Breast epithelium (tissue), 4 donors: ENCODE measurements at regions of chr4 and their contacts with region 1.

Region 1: DNA sequence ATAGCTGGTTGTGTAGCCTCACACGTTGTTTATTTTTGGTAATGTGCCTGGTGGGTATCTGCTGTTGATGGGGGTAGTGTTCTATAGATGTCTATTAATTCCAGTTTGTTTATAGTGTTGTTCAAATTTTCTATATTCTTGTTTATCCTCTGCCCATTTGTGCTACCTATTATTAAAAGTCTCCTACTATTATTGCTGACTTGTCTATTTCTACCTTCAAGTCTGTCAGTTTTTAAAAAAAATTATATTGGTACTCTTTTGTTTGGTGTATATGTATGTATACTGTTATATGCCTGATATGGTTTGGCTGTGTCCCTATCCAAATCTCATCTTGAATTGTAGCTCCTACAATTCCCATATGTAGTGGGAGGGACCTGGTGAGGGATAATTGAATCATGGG is 578.6 kb downstream of the PCDH7 start:
- DNase-seq: no peak
- H3K4me3 ChIP-seq: no peak overlapping the region
- H3K27ac ChIP-seq: no peak overlapping the region
- H3K4me1 ChIP-seq: no peaks in the 10 kb centered on the region
- H3K27me3 ChIP-seq: no peaks in the 10 kb centered on the region
- CTCF ChIP-seq: no peak
- POLR2A ChIP-seq: no peak

Region 2: DNA sequence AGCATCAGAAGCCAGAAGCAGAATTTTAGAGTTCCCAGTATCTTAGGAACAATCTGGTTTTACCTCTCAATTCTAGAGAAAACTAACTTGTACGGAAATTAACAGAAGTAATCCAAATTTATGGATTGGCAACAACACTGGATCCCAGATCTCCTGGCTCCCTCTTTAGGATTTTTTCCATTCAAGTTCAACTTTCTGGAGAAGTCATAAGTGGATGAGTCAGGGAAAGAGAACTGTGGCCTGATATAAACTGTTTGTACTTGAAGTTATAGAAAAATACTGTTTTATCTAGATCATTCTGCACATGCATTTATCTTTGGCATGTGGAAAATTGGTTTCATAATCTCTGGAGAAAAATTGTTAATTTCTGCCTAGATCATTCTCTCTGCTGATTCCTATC is 198.2 kb before region 1 on chr4:
- intact Hi-C with region 1: no loop called
- DNase-seq: no peak
- H3K4me3 ChIP-seq: no peak overlapping the region
- H3K27ac ChIP-seq: no peak overlapping the region
- H3K4me1 ChIP-seq: no peaks in the 10 kb centered on the region
- H3K27me3 ChIP-seq: no peaks in the 10 kb centered on the region
- CTCF ChIP-seq: no peak
- POLR2A ChIP-seq: no peak

Region 3: GRCh38 chr4:31259119-31259518 is 39.6 kb before region 1 on chr4:
- intact Hi-C with region 1: loop called (anchors 2 kb)
- DNase-seq: no peak
- H3K4me3 ChIP-seq: no peak overlapping the region
- H3K27ac ChIP-seq: no peak overlapping the region
- H3K4me1 ChIP-seq: no peaks in the 10 kb centered on the region
- H3K27me3 ChIP-seq: no peaks in the 10 kb centered on the region
- CTCF ChIP-seq: no peak
- POLR2A ChIP-seq: no peak

Region 4: DNA sequence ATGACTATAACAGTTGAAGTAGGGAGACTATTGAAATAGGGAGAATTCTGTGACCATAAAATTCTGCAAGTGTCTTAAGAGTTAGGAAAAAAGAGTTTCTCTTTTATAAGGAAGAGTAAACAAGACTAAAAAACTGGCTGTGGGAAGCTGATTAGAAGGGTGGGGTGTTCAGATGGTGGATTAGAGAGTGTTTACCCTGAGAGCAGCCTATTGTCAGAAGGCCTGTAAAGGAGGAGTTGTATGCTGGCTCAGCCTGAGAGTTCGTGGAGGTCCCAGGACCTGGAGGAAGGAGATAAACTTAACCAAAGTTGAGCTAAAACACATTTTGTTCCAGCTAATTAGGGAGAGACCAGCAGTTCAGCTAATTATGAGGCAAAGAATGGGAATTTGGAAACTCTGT is 51.2 kb after region 1 on chr4:
- intact Hi-C with region 1: no loop called
- DNase-seq: no peak
- H3K4me3 ChIP-seq: no peak overlapping the region
- H3K27ac ChIP-seq: no peak overlapping the region
- H3K4me1 ChIP-seq: no peaks in the 10 kb centered on the region
- H3K27me3 ChIP-seq: no peaks in the 10 kb centered on the region
- CTCF ChIP-seq: no peak
- POLR2A ChIP-seq: no peak